CD14-positive monocyte (primary cell): ENCODE measurements at regions of chr22 and their contacts with region 1.

Region 1: GRCh38 chr22:49767355-49768062 is 60.2 kb downstream of the BRD1 start:
- DNase-seq: peak; percentile 29 to 73 (median 54)
- H3K4me3 ChIP-seq: no peak overlapping the region
- H3K4me3 Mint-ChIP-seq: no peak overlapping the region
- H3K27ac ChIP-seq: no peak overlapping the region
- H3K27ac Mint-ChIP-seq: no peak overlapping the region
- H3K4me1 ChIP-seq: no peaks in the 10 kb centered on the region
- H3K4me1 Mint-ChIP-seq: no peaks in the 10 kb centered on the region
- H3K27me3 ChIP-seq: no peaks in the 10 kb centered on the region
- H3K27me3 Mint-ChIP-seq: peaks cover 6 to 19% (median 10%) of the 10 kb centered on the region in 3 donors
- CTCF ChIP-seq: peak; percentile 85

Region 2: GRCh38 chr22:50030297-50031188 is 263.0 kb after region 1 on chr22:
- intact Hi-C with region 1: loop called (anchors 5 kb)
- DNase-seq: peak; percentile 63 to 67 (median 63)
- H3K4me3 ChIP-seq: no peak overlapping the region
- H3K4me3 Mint-ChIP-seq: no peak overlapping the region
- H3K27ac ChIP-seq: no peak overlapping the region
- H3K27ac Mint-ChIP-seq: no peak overlapping the region
- H3K4me1 ChIP-seq: peaks cover 0 to 6% of the 10 kb centered on the region in 2 donors
- H3K4me1 Mint-ChIP-seq: peaks cover 3% of the 10 kb centered on the region
- H3K27me3 ChIP-seq: peaks cover 8 to 27% of the 10 kb centered on the region in 2 donors
- H3K27me3 Mint-ChIP-seq: peaks cover 15 to 31% (median 27%) of the 10 kb centered on the region in 3 donors
- CTCF ChIP-seq: peak; percentile 85